Naive thymus-derived CD4-positive, alpha-beta T cell (primary cell): ENCODE measurements at regions of chr10 and their contacts with region 1.

Region 1: DNA sequence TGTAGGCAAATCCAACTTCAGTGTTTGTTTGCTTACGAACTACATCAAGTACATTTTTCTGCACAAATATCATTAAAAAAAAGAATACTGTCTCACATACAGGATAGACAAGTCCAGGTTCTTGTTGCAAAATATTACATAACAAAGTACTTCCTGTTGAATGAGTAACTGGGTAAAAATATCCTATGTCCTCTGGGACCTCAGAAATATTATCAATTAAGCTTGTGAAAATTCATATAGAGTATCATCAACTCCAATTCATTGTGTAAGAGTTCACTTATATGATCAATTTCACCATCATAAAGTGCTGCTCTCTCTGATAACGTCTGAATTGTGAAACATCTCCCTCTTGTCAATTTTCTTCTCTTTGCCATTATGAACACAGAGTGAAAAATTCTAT is 22.6 kb downstream of the HERC4 start:
- DNase-seq: no peak
- ATAC-seq: no peak
- H3K4me3 ChIP-seq: no peak overlapping the region
- H3K4me3 Mint-ChIP-seq: peak overlapping the region in 2 of 10 donors; percentile 23 to 39
- H3K27ac ChIP-seq: no peak overlapping the region
- H3K27ac Mint-ChIP-seq: peak overlapping the region in 4 of 9 donors; percentile 48 to 83 (median 62)
- H3K4me1 ChIP-seq: peaks cover 0 to 6% of the 10 kb centered on the region in 2 donors
- H3K4me1 Mint-ChIP-seq: peaks cover 15 to 59% (median 55%) of the 10 kb centered on the region in 7 donors
- H3K27me3 ChIP-seq: no peaks in the 10 kb centered on the region
- H3K27me3 Mint-ChIP-seq: no peaks in the 10 kb centered on the region

Region 2: GRCh38 chr10:68001539-68001938 is 50.9 kb before region 1 on chr10:
- CTCF ChIA-PET with region 1: no interaction called
- POLR2A ChIA-PET with region 1: no interaction called
- intact Hi-C with region 1: no loop called
- DNase-seq: no peak
- ATAC-seq: no peak
- H3K4me3 ChIP-seq: no peak overlapping the region
- H3K4me3 Mint-ChIP-seq: no peak overlapping the region
- H3K27ac ChIP-seq: no peak overlapping the region
- H3K27ac Mint-ChIP-seq: peak overlapping the region in 1 of 9 donors; percentile 14
- H3K4me1 ChIP-seq: no peaks in the 10 kb centered on the region
- H3K4me1 Mint-ChIP-seq: peaks cover 0 to 4% (median 0%) of the 10 kb centered on the region in 7 donors
- H3K27me3 ChIP-seq: no peaks in the 10 kb centered on the region
- H3K27me3 Mint-ChIP-seq: no peaks in the 10 kb centered on the region

Region 3: GRCh38 chr10:68032113-68032512 is 20.4 kb before region 1 on chr10:
- CTCF ChIA-PET with region 1: no interaction called
- POLR2A ChIA-PET with region 1: no interaction called
- intact Hi-C with region 1: loop called in 1 of 2 experiments (anchors 2 kb)
- DNase-seq: no peak
- ATAC-seq: no peak
- H3K4me3 ChIP-seq: no peak overlapping the region
- H3K4me3 Mint-ChIP-seq: no peak overlapping the region
- H3K27ac ChIP-seq: no peak overlapping the region
- H3K27ac Mint-ChIP-seq: peak overlapping the region in 1 of 9 donors; percentile 6
- H3K4me1 ChIP-seq: no peaks in the 10 kb centered on the region
- H3K4me1 Mint-ChIP-seq: peaks cover 0 to 21% (median 14%) of the 10 kb centered on the region in 7 donors
- H3K27me3 ChIP-seq: no peaks in the 10 kb centered on the region
- H3K27me3 Mint-ChIP-seq: no peaks in the 10 kb centered on the region

Region 4: GRCh38 chr10:68151453-68151852 is 99.0 kb after region 1 on chr10:
- CTCF ChIA-PET with region 1: no interaction called
- POLR2A ChIA-PET with region 1: no interaction called
- intact Hi-C with region 1: no loop called
- DNase-seq: no peak
- ATAC-seq: no peak
- H3K4me3 ChIP-seq: no peak overlapping the region
- H3K4me3 Mint-ChIP-seq: no peak overlapping the region
- H3K27ac ChIP-seq: no peak overlapping the region
- H3K27ac Mint-ChIP-seq: no peak overlapping the region
- H3K4me1 ChIP-seq: no peaks in the 10 kb centered on the region
- H3K4me1 Mint-ChIP-seq: peaks cover 0 to 4% (median 0%) of the 10 kb centered on the region in 7 donors
- H3K27me3 ChIP-seq: no peaks in the 10 kb centered on the region
- H3K27me3 Mint-ChIP-seq: peaks cover 0 to 8% (median 4%) of the 10 kb centered on the region in 5 donors